ENCODE measurements at regions of chrX and their contacts with region 1.

Region 1: DNA sequence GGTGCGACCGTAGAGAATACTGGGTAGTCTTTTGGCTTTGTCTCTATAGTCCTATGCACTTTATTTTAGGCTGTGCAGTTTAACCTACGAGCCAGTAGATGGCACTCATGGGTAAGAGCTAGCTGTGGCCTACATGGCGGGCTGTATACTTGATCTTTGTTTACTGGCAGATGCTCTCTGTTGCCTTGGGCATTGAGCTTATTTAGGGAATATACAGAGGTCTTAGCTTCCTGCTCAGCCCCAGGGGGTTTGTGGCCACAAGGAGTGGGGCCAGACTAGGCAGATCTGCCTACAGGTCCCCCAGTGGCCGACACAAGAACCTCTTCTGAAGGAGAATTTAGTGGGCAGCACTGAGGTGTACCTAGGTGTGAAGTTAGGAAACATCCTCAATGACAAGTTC is 227.6 kb upstream of the HDX start:
- DNase-seq: no peak
- H3K4me3 Mint-ChIP-seq: no peak overlapping the region
- H3K27ac Mint-ChIP-seq: no peak overlapping the region
- H3K4me1 Mint-ChIP-seq: no peaks in the 10 kb centered on the region
- H3K27me3 Mint-ChIP-seq: no peaks in the 10 kb centered on the region

Region 2: DNA sequence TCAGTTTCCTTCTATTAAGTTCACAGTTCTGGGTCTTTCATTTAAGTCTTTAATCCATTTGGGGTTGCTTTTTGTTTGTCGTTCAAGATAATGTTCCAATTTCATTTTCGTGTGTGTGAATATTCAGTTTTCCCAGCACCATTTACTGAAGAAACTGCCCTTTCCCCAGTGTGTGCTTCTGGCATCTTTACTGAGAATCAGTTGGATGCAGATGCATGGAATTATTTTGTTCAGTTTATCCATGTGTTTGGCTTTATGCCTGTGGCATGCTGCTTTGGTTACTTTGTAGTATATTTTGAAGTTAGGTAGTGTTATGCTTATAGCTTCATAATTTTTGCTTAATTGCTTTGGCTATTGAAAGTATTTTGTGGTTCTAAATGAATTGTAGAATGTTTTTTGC is 63.7 kb before region 1 on chrX:
- intact Hi-C with region 1: no loop called
- DNase-seq: no peak
- H3K4me3 Mint-ChIP-seq: no peak overlapping the region
- H3K27ac Mint-ChIP-seq: no peak overlapping the region
- H3K4me1 Mint-ChIP-seq: no peaks in the 10 kb centered on the region
- H3K27me3 Mint-ChIP-seq: no peaks in the 10 kb centered on the region

Region 3: DNA sequence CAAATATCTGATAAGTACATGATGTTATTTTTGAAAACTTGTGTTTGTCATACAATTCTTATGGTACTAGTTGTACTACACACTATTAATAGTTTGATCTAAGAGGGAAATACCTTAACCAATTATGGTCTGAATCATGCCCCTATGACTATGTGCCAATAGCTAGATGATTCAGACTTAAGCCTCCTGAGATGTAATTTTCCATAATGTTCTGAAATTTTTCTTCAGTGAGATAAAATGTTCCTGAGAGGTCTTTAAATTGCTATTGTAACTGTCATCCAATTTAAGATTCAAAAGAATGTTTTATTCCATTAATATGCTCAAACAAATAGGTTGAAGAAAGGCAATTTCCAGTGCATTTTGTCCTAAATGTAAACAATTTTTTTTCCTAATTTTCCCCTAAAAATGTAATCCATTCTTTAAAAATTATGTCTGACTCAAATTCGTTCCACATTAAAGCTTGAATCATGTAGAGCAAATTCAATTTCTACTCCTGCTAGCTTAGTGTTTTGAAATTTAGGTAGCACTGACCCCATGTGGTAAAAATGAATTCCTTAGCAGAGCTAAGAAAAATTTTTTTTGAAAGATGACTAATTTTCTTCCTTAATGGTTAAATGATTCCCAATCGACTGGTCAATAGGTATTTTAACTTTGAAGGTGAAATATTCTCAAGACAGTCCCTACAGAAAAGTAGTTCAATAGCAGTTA is 323.0 kb after region 1 on chrX:
- intact Hi-C with region 1: loop called (anchors 2 kb)
- DNase-seq: no peak
- H3K4me3 Mint-ChIP-seq: no peak overlapping the region
- H3K27ac Mint-ChIP-seq: no peak overlapping the region
- H3K4me1 Mint-ChIP-seq: no peaks in the 10 kb centered on the region
- H3K27me3 Mint-ChIP-seq: no peaks in the 10 kb centered on the region

Measured in activated T-helper 2 cell treated with anti-CD3 and anti-CD28 coated beads, Interferon-gamma antibody, Interleukin-2, Interleukin-4, amounts not matched to agents 10 μg/mL and 5 μg/mL and 100 μg/mL, durations not matched to agents 14 hours and 24 hours and 36 hours (primary cell).